ENCODE measurements at regions of chrX and their contacts with region 1.

Region 1: GRCh38 chrX:21959362-21960105 is 19.0 kb downstream of the SMS start:
- DNase-seq: no peak
- H3K4me3 ChIP-seq: no peak overlapping the region
- H3K27ac ChIP-seq: no peak overlapping the region
- H3K4me1 ChIP-seq: peaks cover 0 to 14% (median 2%) of the 10 kb centered on the region in 4 experiments; a peak in 5 of 7 replicates
- H3K27me3 ChIP-seq: no peaks in the 10 kb centered on the region
- CTCF ChIP-seq: no peak
- EP300 ChIP-seq: no peak
- POLR2A ChIP-seq: no peak
- RAD21 ChIP-seq: no peak

Region 2: GRCh38 chrX:21574793-21575192 is 384.7 kb before region 1 on chrX:
- CTCF ChIA-PET with region 1: no interaction called
- POLR2A ChIA-PET with region 1: no interaction called
- DNase-seq: no peak
- H3K4me3 ChIP-seq: no peak overlapping the region
- H3K27ac ChIP-seq: no peak overlapping the region
- H3K4me1 ChIP-seq: no peaks in the 10 kb centered on the region
- H3K27me3 ChIP-seq: no peaks in the 10 kb centered on the region
- CTCF ChIP-seq: no peak
- EP300 ChIP-seq: no peak
- POLR2A ChIP-seq: no peak
- RAD21 ChIP-seq: no peak

Region 3: GRCh38 chrX:21914306-21914953 is 45.1 kb before region 1 on chrX:
- CTCF ChIA-PET with region 1: no interaction called
- POLR2A ChIA-PET with region 1: no interaction called
- DNase-seq: no peak
- H3K4me3 ChIP-seq: no peak overlapping the region
- H3K27ac ChIP-seq: no peak overlapping the region
- H3K4me1 ChIP-seq: no peaks in the 10 kb centered on the region
- H3K27me3 ChIP-seq: no peaks in the 10 kb centered on the region
- CTCF ChIP-seq: no peak
- EP300 ChIP-seq: no peak
- POLR2A ChIP-seq: no peak
- RAD21 ChIP-seq: no peak

Region 4: GRCh38 chrX:21944169-21944555 is 15.4 kb before region 1 on chrX:
- CTCF ChIA-PET with region 1: no interaction called
- POLR2A ChIA-PET with region 1: interaction called, 10 read pairs
- DNase-seq: no peak
- H3K4me3 ChIP-seq: peak overlapping the region in 1 of 4 experiments; percentile 77; a peak in 1 of 8 replicates
- H3K27ac ChIP-seq: no peak overlapping the region; the same call in 1 of the 2 replicates
- H3K4me1 ChIP-seq: peaks cover 0 to 19% (median 14%) of the 10 kb centered on the region in 4 experiments
- H3K27me3 ChIP-seq: no peaks in the 10 kb centered on the region
- CTCF ChIP-seq: no peak
- EP300 ChIP-seq: no peak
- POLR2A ChIP-seq: no peak
- RAD21 ChIP-seq: no peak

Region 5: GRCh38 chrX:21972721-21973120 is 13.2 kb after region 1 on chrX:
- CTCF ChIA-PET with region 1: interaction called, 15 read pairs
- POLR2A ChIA-PET with region 1: no interaction called
- DNase-seq: peak in 1 of 2 experiments; percentile 3
- H3K4me3 ChIP-seq: no peak overlapping the region
- H3K27ac ChIP-seq: no peak overlapping the region
- H3K4me1 ChIP-seq: no peaks in the 10 kb centered on the region
- H3K27me3 ChIP-seq: no peaks in the 10 kb centered on the region
- CTCF ChIP-seq: no peak
- EP300 ChIP-seq: no peak
- POLR2A ChIP-seq: no peak
- RAD21 ChIP-seq: peak; percentile 16 to 35; a peak in 3 of 4 replicates

Region 6: DNA sequence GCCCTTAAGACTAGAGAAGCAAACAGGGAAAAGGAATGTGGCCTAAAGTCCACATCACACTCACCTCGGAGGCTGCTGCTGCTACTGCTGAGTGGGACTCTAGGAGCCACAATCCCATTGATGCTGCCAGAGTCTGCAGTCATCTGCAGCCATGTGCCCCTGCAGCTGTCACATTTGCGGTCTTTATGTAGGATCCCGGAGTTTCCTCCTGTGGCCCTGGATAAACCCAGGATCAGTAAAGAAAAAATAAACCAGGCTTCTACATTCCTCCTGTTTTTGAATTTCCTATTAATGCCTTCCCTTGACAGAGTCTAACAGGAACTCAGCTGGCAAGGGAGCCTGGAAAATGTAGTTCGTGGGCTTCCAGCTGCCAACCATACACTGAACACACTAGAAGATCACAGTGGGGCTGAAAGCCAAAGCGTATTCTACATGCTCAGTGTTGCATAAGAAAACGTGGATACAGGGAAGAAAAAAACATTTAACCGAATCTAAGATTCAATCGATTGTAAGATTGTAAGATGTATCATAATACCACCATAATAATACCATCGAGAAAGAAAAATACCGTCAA is 62.3 kb after region 1 on chrX:
- CTCF ChIA-PET with region 1: no interaction called
- POLR2A ChIA-PET with region 1: no interaction called
- DNase-seq: no peak
- H3K4me3 ChIP-seq: no peak overlapping the region
- H3K27ac ChIP-seq: no peak overlapping the region
- H3K4me1 ChIP-seq: no peaks in the 10 kb centered on the region; a peak in 1 of 7 replicates
- H3K27me3 ChIP-seq: no peaks in the 10 kb centered on the region
- CTCF ChIP-seq: no peak
- EP300 ChIP-seq: no peak
- POLR2A ChIP-seq: no peak
- RAD21 ChIP-seq: no peak